ENCODE measurements at regions of chr1 and their contacts with region 1.

Region 1: GRCh38 chr1:233962878-233963277 is 58.4 kb downstream of the SLC35F3 start:
- DNase-seq: no peak
- H3K4me3 Mint-ChIP-seq: no peak overlapping the region
- H3K27ac Mint-ChIP-seq: no peak overlapping the region
- H3K4me1 Mint-ChIP-seq: no peaks in the 10 kb centered on the region
- H3K27me3 Mint-ChIP-seq: no peaks in the 10 kb centered on the region
- CTCF ChIP-seq: no peak

Region 2: DNA sequence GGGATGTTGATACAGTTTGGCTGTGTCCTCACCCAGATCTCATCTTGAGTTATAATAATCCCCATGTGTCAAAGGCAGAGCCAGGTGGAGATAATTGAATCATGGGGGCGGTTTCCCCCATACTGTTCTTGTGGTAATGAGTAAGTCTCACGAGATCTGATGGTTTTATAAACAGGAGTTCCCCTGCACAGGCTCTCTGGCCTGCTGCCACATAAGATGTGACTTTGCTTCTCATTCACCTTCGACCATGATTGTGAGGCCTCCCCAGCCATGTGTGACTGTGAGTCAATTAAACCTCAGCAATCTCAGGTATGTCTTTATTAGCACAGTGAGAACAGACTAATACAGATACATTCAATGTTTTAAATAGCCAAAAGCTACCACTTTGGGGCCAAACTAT is 17.3 kb before region 1 on chr1:
- CTCF ChIA-PET with region 1: no interaction called
- POLR2A ChIA-PET with region 1: no interaction called
- intact Hi-C with region 1: no loop called
- DNase-seq: peak; percentile 21
- H3K4me3 Mint-ChIP-seq: no peak overlapping the region
- H3K27ac Mint-ChIP-seq: no peak overlapping the region
- H3K4me1 Mint-ChIP-seq: peaks cover 7% of the 10 kb centered on the region
- H3K27me3 Mint-ChIP-seq: no peaks in the 10 kb centered on the region
- CTCF ChIP-seq: no peak

Region 3: GRCh38 chr1:233972939-233973635 is 10.2 kb after region 1 on chr1:
- CTCF ChIA-PET with region 1: interaction called, 14 read pairs
- POLR2A ChIA-PET with region 1: no interaction called
- intact Hi-C with region 1: no loop called
- DNase-seq: peak; percentile 43
- H3K4me3 Mint-ChIP-seq: no peak overlapping the region
- H3K27ac Mint-ChIP-seq: no peak overlapping the region
- H3K4me1 Mint-ChIP-seq: peaks cover 9% of the 10 kb centered on the region
- H3K27me3 Mint-ChIP-seq: no peaks in the 10 kb centered on the region
- CTCF ChIP-seq: no peak